ENCODE measurements at regions of chr1 and their contacts with region 1.

Region 1: DNA sequence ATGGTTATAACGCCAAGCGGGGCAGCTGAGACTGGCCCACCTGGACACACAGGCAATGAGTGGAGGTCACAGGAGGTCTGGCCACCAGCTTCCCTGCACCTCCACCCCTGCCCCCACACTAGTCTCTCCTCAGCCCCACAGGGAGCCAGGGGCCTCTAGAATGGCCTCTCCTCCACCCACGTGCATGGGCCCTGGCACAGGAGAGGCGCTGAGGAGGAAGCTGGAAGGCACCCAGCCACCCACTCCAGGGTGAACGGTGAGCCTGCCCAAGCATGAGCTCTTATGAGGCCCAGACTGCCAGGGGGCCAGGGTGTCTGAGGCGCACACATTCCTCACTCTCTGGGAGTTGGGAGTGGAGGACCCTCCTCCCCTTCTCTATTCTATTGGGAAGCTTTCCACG is 22.2 kb downstream of the LRP8 start:
- DNase-seq: no peak
- ATAC-seq: peak in 1 of 2 donors; percentile 46
- H3K4me3 ChIP-seq: no peak overlapping the region
- H3K27ac ChIP-seq: no peak overlapping the region
- H3K4me1 ChIP-seq: no peaks in the 10 kb centered on the region
- H3K27me3 ChIP-seq: no peaks in the 10 kb centered on the region

Region 2: DNA sequence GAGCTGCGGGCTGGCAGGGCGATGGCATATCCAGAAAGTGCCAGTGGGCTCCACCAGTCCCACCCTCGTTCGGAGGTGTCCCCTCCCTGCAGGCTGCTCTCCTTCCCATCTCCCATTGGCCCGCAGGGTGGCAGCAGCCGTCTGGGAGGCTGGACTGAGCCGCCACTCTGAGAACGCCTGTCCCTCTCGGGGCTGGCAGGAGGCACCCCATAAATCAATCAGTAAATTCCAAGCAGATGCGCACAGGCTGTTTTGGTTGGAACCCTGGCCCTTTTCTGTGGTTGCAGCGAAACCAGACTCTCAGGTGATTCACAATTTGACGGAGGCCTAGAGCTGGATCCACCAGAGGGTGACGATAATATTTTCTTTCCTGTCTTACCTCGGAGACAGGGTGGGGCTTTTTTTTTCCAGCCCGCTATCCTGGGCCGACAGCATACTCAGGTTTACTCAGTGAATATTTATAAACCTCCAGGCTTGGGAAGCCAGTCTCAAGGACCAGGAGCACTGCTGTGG is 333.7 kb after region 1 on chr1:
- intact Hi-C with region 1: loop called in 1 of 4 experiments (anchors 5 kb)
- DNase-seq: no peak
- ATAC-seq: no peak
- H3K4me3 ChIP-seq: no peak overlapping the region
- H3K27ac ChIP-seq: no peak overlapping the region
- H3K4me1 ChIP-seq: no peaks in the 10 kb centered on the region
- H3K27me3 ChIP-seq: no peaks in the 10 kb centered on the region

Measured in right cardiac atrium (tissue), 5 donors.